Dorsolateral prefrontal cortex (tissue), 120 donors: ENCODE measurements at regions of chr1 and their contacts with region 1.

Region 1: DNA sequence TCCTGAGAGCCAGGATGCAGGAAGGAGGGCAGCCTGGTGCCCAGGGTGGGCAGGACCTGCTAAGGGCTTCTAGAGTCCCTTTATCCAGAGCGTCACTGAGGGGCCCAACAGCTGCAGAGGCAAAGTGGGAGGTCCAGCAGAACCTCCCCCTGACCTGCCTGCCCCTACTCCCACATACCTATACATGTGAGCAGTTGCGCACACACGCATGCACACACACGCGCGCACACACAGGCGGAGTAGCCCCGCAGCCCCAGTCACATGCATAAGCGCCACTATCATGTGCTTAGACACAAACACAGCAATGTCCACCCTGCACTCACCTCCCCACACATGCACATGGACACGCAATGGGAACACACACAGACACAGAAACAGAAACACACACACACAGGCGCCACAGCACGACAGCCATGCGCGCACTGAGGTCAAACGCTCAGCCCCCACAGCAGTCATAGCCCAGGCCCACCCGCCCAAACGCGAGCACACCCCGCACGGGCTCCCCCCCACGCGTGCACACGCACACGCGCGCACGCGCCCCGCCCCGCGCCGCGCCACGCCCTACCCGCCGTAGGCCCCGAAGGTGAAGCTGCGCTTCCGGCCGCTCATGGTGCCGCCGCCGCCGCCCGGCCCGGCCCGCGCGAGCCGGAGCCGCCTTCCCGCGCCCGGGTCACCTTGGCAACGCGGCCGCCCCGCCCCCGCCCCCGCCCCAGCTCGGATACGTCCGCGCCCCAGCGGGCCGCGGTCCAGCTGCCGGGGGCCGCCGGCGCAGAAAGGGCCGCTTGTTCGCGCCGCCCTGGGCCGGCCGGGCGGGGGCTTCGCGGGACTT is 17.7 kb downstream of the RAP1GAP start:
- DNase-seq: peak in 5 of 10 donors; percentile 46 to 82 (median 53)
- H3K4me3 ChIP-seq: peak overlapping the region; percentile 34 to 76 (median 62)
- H3K27ac ChIP-seq: peak overlapping the region; percentile 1 to 97 (median 88)
- H3K27me3 ChIP-seq: no peaks in the 10 kb centered on the region
- CTCF ChIP-seq: no peak

Region 2: DNA sequence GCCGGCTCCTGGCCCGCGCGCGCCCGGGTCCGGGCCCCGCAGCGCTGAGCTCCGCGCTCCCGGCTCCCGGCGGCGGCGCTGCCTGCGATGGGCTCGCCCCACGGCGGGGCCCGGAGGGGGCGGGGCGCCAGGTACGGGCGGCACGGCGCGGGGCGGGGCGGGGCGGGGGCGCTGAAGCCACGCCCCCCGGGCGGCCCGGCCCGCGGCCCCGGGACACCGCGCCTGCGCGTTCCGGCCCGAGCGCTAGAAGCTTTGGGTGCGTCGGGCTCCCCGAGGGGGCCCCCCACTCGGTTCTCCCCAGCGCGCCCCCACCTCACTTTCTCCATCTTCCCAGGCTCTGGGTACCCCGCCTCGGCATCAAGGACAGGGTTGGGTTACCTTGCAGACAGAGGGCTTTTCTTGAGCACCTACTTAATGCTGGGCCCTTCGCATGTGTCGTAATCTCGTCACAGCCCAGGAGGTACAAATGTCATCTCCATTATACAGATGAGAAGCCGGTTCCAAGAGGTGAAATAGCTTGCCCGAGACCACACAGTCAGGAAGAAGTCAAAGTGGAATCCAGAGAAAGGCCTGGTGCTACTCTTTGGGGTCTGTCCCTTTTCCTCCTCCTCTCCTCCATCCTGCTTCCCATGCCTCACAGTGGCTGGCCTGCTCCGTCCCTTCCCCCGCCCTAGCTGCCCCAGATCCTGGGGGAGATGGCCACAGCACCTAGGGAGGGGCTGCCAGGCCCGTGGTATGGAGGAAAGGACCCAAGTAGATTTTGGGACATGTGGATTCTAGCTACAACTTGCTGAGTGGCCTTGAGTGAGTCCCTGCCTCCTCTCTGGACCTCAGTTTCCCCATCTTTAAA is 28.7 kb before region 1 on chr1:
- intact Hi-C with region 1: loop called (anchors 2 to 5 kb)
- DNase-seq: no peak
- H3K4me3 ChIP-seq: peak overlapping the region in 19 of 59 donors; percentile 12 to 52 (median 33)
- H3K27ac ChIP-seq: peak overlapping the region in 26 of 59 donors; percentile 1 to 80 (median 46)
- H3K27me3 ChIP-seq: peaks cover 0 to 3% (median 0%) of the 10 kb centered on the region in 45 donors
- CTCF ChIP-seq: no peak